ENCODE measurements at regions of chr2 and their contacts with region 1.

Region 1: GRCh38 chr2:235493775-235494715 is at the start of gene AGAP1:
- DNase-seq: peak; percentile 74
- ATAC-seq: peak; percentile 82
- H3K4me3 ChIP-seq: peak within 1 kb of the TSS; percentile 74 to 86 (median 75)
- H3K27ac ChIP-seq: peak within 1 kb of the TSS; percentile 35
- H3K4me1 ChIP-seq: peaks cover 49% of the 10 kb centered on the region
- H3K27me3 ChIP-seq: peaks cover 0 to 14% of the 10 kb centered on the region in 2 experiments; a peak in 2 of 5 replicates
- CTCF ChIP-seq: no peak
- EP300 ChIP-seq: no peak
- POLR2A ChIP-seq: peak in 1 of 2 experiments; percentile 50; a peak in 1 of 4 replicates
- RAD21 ChIP-seq: peak; percentile 2; the same call in 1 of the 2 replicates
- total RNA-seq, gene AGAP1: 21.2 and 21.3 TPM in 2 replicates

Region 2: GRCh38 chr2:235135990-235136561 is 358.0 kb before region 1 on chr2:
- CTCF ChIA-PET with region 1: interaction called, 3 read pairs
- POLR2A ChIA-PET with region 1: no interaction called
- in situ Hi-C with region 1: loop called (anchors 10 kb)
- intact Hi-C with region 1: loop called (anchors 5 kb)
- DNase-seq: peak; percentile 78
- ATAC-seq: peak; percentile 95
- H3K4me3 ChIP-seq: no peak overlapping the region
- H3K27ac ChIP-seq: no peak overlapping the region
- H3K4me1 ChIP-seq: no peaks in the 10 kb centered on the region
- H3K27me3 ChIP-seq: peaks cover 0 to 40% of the 10 kb centered on the region in 2 experiments; a peak in 4 of 5 replicates
- CTCF ChIP-seq: peak; percentile 87
- EP300 ChIP-seq: no peak
- POLR2A ChIP-seq: no peak
- RAD21 ChIP-seq: peak; percentile 88

Region 3: GRCh38 chr2:235170536-235171521 is 323.2 kb before region 1 on chr2:
- CTCF ChIA-PET with region 1: no interaction called
- POLR2A ChIA-PET with region 1: no interaction called
- in situ Hi-C with region 1: no loop called
- intact Hi-C with region 1: no loop called
- DNase-seq: no peak
- ATAC-seq: peak; percentile 90
- H3K4me3 ChIP-seq: no peak overlapping the region
- H3K27ac ChIP-seq: no peak overlapping the region
- H3K4me1 ChIP-seq: peaks cover 12% of the 10 kb centered on the region
- H3K27me3 ChIP-seq: peaks cover 0 to 8% of the 10 kb centered on the region in 2 experiments
- CTCF ChIP-seq: no peak
- EP300 ChIP-seq: no peak
- POLR2A ChIP-seq: no peak
- RAD21 ChIP-seq: no peak

Region 4: DNA sequence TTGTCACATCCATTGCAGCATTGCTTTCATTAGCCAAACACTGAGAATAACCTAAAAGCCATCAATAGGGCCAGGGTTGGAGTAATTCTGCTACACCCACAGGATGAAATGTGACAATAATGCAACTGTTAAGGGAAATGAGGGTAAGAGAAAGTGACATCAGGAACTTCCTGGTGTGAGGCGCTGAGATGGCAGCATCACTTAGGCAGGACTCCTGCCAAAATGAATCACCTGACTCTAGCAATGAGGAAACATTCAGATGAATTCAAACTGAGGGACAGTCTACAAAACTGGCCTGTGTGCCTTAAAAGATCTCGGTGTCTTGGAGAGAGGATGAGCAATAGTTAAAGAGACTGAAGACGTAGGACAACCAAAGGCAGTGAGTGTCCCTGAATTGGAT is 115.8 kb before region 1 on chr2:
- CTCF ChIA-PET with region 1: no interaction called
- POLR2A ChIA-PET with region 1: no interaction called
- in situ Hi-C with region 1: no loop called
- intact Hi-C with region 1: no loop called
- DNase-seq: no peak
- ATAC-seq: no peak
- H3K4me3 ChIP-seq: no peak overlapping the region
- H3K27ac ChIP-seq: no peak overlapping the region
- H3K4me1 ChIP-seq: no peaks in the 10 kb centered on the region
- H3K27me3 ChIP-seq: peaks cover 3 to 40% of the 10 kb centered on the region in 2 experiments; a peak in 3 of 5 replicates
- CTCF ChIP-seq: no peak
- EP300 ChIP-seq: no peak
- POLR2A ChIP-seq: no peak
- RAD21 ChIP-seq: no peak

Region 5: GRCh38 chr2:235480614-235481013 is 13.4 kb before region 1 on chr2:
- CTCF ChIA-PET with region 1: no interaction called
- POLR2A ChIA-PET with region 1: no interaction called
- in situ Hi-C with region 1: no loop called
- intact Hi-C with region 1: no loop called
- DNase-seq: no peak
- ATAC-seq: no peak
- H3K4me3 ChIP-seq: no peak overlapping the region
- H3K27ac ChIP-seq: no peak overlapping the region
- H3K4me1 ChIP-seq: peaks cover 12% of the 10 kb centered on the region; the same call in 1 of the 2 replicates
- H3K27me3 ChIP-seq: peaks cover 0 to 12% of the 10 kb centered on the region in 2 experiments; a peak in 1 of 5 replicates
- CTCF ChIP-seq: no peak
- EP300 ChIP-seq: no peak
- POLR2A ChIP-seq: no peak
- RAD21 ChIP-seq: no peak

Region 6: DNA sequence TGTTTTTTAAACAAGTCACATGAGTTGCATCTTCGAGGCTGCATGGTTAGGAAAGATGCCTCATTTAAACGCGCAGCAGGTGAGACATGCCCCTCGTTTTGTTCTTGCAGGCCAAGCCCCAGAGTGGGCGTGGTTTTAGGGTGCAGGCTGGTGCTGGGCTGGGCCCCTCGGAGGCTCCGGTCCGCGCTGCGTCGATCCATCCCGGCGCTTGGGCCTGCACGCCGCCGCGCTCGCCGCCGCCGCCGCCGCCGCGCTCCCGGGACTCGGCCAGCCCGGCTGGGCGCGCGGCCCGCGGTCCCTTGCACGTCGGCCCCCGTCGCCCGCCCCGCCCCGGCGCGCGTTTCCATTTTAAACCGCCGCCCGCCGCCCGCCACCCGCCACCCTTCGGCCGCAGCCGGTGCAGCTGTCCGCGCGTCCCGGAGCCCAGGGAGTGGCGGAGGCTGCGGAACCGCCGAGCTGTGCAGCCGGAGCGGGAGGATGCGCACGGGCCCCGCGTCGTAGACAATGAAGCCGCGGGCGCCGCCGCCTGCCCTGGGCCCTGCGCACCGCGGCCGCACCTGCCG is 175.3 kb after region 1 on chr2:
- CTCF ChIA-PET with region 1: no interaction called
- POLR2A ChIA-PET with region 1: no interaction called
- in situ Hi-C with region 1: no loop called
- intact Hi-C with region 1: loop called (anchors 10 kb)
- DNase-seq: peak; percentile 69
- ATAC-seq: peak; percentile 77
- H3K4me3 ChIP-seq: peak overlapping the region; percentile 63 to 82 (median 66); a peak in 5 of 6 replicates
- H3K27ac ChIP-seq: no peak overlapping the region
- H3K4me1 ChIP-seq: peaks cover 53% of the 10 kb centered on the region
- H3K27me3 ChIP-seq: no peaks in the 10 kb centered on the region
- CTCF ChIP-seq: no peak
- EP300 ChIP-seq: no peak
- POLR2A ChIP-seq: no peak
- RAD21 ChIP-seq: no peak

Region 7: DNA sequence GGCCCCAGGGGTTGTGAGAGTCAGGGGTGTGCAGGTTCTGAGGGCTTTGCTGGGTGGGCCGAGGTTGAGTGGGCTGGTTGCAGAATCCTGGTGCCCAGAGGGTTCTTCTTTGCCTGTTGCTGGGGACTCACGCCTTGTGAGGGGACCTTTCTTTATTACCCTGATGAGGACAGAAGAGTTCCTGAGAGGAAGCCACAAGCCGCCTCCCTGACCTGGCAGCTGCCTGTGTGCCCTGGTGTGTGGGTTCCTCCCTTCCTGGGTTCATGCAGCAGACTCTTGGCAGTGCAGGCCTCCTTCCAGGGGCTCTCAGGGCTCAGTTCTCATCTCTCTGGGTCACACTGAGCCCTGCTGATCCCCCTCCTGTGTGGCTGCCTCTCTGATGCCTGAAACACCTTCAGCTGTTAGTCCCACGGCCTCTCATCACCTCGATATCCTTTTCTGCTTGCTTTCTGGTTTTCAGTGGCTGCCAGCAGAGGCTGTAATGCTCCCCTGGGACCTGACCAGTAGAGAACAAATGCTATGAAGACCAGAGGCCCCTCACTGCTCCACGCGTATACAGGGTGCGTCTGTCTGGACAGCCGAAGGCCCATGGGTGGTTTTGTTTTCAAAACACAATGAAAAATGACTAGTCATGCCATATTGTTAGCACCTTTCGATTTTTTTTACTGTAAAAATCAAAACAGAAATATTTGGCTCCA is 191.1 kb after region 1 on chr2:
- CTCF ChIA-PET with region 1: no interaction called
- POLR2A ChIA-PET with region 1: no interaction called
- in situ Hi-C with region 1: no loop called
- intact Hi-C with region 1: no loop called
- DNase-seq: no peak
- ATAC-seq: no peak
- H3K4me3 ChIP-seq: no peak overlapping the region
- H3K27ac ChIP-seq: no peak overlapping the region
- H3K4me1 ChIP-seq: peaks cover 29% of the 10 kb centered on the region
- H3K27me3 ChIP-seq: no peaks in the 10 kb centered on the region
- CTCF ChIP-seq: no peak
- EP300 ChIP-seq: no peak
- POLR2A ChIP-seq: no peak
- RAD21 ChIP-seq: no peak

Measured in HepG2 (cell line).